Mammary epithelial cell (primary cell): ENCODE measurements at regions of chr1 and their contacts with region 1.

Region 1: DNA sequence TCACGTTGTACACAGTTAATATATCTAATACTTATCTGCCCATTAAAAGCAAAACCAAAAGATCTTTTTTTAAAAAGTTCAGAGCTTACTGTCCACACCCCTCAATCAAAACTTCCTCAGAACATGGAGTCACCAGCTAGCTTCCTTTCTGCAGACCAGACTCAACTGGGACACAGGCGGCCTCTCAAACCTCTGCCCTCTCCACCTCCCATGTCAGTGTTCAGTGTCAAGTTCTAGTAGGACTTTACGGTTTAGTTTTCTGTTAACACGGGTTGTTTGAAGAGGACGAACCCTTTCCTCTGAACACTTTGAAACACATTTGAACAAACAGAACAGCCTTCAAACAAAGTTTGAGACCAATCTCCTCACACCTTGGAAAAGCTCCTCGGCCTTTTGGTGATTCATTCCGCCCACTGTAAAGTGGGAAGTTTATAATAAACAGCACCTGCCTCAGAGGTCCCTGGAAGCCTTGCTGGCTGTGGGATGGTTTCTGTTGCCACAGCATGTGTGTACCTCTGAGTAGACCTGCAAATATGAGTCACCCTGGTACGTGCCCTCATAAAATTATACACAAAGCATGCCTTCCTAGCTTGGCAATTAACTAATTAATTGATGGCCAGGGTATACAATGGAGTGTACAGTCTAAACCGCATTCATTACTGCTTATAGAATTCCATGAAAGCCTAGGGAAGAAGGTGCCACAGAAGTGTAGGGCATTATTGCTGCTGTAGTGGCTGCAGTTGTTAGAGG is 48.4 kb upstream of the SIPA1L2 start:
- DNase-seq: peak; percentile 89
- H3K4me3 ChIP-seq: no peak overlapping the region
- H3K27ac ChIP-seq: no peak overlapping the region
- H3K4me1 ChIP-seq: peaks cover 7% of the 10 kb centered on the region
- H3K27me3 ChIP-seq: no peaks in the 10 kb centered on the region
- CTCF ChIP-seq: no peak

Region 2: DNA sequence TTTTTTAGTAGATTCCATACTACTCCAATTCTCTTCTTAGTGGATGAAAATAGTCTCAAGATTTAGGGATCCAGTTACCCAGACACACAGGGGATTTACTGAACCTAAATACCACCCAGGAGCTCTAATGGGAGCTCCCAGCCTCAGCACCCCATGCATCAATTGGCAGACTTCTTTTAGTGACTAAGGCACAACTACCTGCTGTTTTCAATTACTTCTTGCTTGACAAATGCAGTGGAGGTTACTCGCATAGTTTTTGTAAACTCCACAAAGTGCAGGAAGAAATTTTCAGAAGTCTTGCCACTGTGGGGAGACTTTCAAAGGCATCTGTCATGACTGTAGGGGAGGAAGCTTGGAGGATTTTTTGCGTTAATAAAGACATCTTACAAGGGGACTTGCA is 91.4 kb after region 1 on chr1:
- CTCF ChIA-PET with region 1: no interaction called
- dilution Hi-C with region 1: loop called (anchors 5 kb)
- in situ Hi-C with region 1: no loop called
- intact Hi-C with region 1: no loop called
- DNase-seq: no peak
- H3K4me3 ChIP-seq: no peak overlapping the region
- H3K27ac ChIP-seq: no peak overlapping the region
- H3K4me1 ChIP-seq: peaks cover 10% of the 10 kb centered on the region
- H3K27me3 ChIP-seq: no peaks in the 10 kb centered on the region
- CTCF ChIP-seq: no peak

Region 3: GRCh38 chr1:232834066-232834465 is 155.7 kb after region 1 on chr1:
- CTCF ChIA-PET with region 1: no interaction called
- dilution Hi-C with region 1: no loop called
- in situ Hi-C with region 1: no loop called
- intact Hi-C with region 1: no loop called
- DNase-seq: no peak
- H3K4me3 ChIP-seq: no peak overlapping the region
- H3K27ac ChIP-seq: no peak overlapping the region
- H3K4me1 ChIP-seq: no peaks in the 10 kb centered on the region
- H3K27me3 ChIP-seq: no peaks in the 10 kb centered on the region
- CTCF ChIP-seq: no peak